PC-9 (cell line): ENCODE measurements at regions of chr16 and their contacts with region 1.

Region 1: GRCh38 chr16:84617791-84618580 is at the start of gene COTL1:
- DNase-seq: peak; percentile 88 to 97
- H3K4me3 ChIP-seq: peak within 1 kb of the TSS; percentile 74
- H3K27ac ChIP-seq: peak within 1 kb of the TSS; percentile 97
- H3K4me1 ChIP-seq: peaks cover 49% of the 10 kb centered on the region
- H3K27me3 ChIP-seq: no peaks in the 10 kb centered on the region
- CTCF ChIP-seq: no peak
- total RNA-seq, gene COTL1: 458 and 512 TPM in 2 replicates

Region 2: GRCh38 chr16:84072014-84072413 is 546.0 kb before region 1 on chr16:
- CTCF ChIA-PET with region 1: no interaction called
- POLR2A ChIA-PET with region 1: interaction called, 11 read pairs
- intact Hi-C with region 1: no loop called
- DNase-seq: no peak
- H3K4me3 ChIP-seq: no peak overlapping the region
- H3K27ac ChIP-seq: no peak overlapping the region
- H3K4me1 ChIP-seq: no peaks in the 10 kb centered on the region
- H3K27me3 ChIP-seq: no peaks in the 10 kb centered on the region
- CTCF ChIP-seq: no peak

Region 3: DNA sequence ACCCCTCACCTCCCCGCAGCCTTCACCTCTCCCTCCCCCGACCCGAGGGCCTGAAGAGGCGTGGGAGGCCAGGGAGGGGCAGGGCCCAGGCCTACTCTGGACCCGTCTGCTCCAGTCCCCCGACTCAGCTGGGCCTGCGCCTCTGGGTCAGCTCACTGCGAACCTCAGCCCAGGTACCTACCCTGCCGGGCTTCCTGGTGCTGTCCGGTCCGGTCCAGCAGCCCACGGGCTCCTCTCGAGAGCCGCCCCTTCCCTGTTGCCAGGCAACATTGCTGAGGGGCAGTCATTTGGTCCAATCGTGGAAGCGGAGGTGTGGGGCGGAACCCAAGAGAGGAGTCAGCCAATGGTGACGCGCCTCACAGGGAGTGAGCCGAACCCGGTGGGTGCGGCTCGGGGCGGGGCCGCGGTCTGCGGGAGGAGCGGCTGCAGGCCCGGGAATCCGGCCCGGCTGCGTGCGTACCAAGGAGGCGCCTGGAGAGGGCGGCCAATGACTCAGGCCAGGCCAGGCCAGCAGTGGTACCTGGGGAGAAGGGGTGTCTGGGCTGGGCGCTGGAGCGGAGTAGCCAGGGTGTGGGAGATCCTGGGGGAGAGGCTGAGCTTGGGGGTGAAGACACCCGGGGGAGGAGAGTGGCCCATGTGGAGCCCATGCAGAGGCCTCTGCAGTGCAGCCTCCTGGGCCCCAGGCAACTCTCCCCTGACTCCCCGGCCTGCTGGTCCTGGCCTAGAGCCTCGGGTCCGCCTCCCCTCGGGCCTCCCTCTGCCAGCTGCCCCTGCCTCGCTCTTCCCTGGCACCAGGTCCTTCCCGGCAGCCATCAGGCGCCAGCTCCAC is 113.4 kb before region 1 on chr16 and contains the start of gene MEAK7:
- CTCF ChIA-PET with region 1: interaction called, 11 read pairs
- POLR2A ChIA-PET with region 1: interaction called, 8 read pairs
- intact Hi-C with region 1: loop called (anchors 1 kb)
- DNase-seq: peak; percentile 95 to 99
- H3K4me3 ChIP-seq: peak within 1 kb of the TSS; percentile 92
- H3K27ac ChIP-seq: peak within 1 kb of the TSS; percentile 99
- H3K4me1 ChIP-seq: peaks cover 59% of the 10 kb centered on the region
- H3K27me3 ChIP-seq: no peaks in the 10 kb centered on the region
- CTCF ChIP-seq: no peak
- total RNA-seq, gene MEAK7: 73.4 and 74.6 TPM in 2 replicates

Region 4: DNA sequence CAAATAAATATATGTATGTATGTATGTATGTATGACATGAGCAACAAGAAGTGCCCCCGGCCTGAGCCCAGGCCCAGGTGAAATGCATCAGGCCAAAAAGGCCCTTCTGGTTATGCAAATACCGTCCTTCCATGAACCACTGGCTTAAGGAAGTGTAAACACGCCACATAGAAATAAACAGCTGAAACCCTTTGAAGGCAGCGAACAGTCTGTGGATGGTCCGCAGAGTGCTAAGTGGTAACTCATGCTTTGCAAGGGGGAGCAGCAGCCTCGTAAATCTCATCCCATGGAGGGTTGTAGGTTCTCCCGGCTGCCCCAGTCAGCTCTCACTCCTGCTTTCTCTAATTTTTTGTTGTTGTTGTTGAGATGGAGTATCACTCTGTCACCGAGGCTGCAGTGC is 36.8 kb before region 1 on chr16:
- CTCF ChIA-PET with region 1: interaction called, 7 read pairs
- POLR2A ChIA-PET with region 1: interaction called, 10 read pairs
- intact Hi-C with region 1: no loop called
- DNase-seq: no peak
- H3K4me3 ChIP-seq: no peak overlapping the region
- H3K27ac ChIP-seq: no peak overlapping the region
- H3K4me1 ChIP-seq: no peaks in the 10 kb centered on the region
- H3K27me3 ChIP-seq: no peaks in the 10 kb centered on the region
- CTCF ChIP-seq: no peak

Region 5: GRCh38 chr16:84633622-84634021 is 15.6 kb after region 1 on chr16:
- CTCF ChIA-PET with region 1: no interaction called
- POLR2A ChIA-PET with region 1: no interaction called
- intact Hi-C with region 1: no loop called
- DNase-seq: no peak
- H3K4me3 ChIP-seq: no peak overlapping the region
- H3K27ac ChIP-seq: no peak overlapping the region
- H3K4me1 ChIP-seq: no peaks in the 10 kb centered on the region
- H3K27me3 ChIP-seq: no peaks in the 10 kb centered on the region
- CTCF ChIP-seq: no peak

Region 6: DNA sequence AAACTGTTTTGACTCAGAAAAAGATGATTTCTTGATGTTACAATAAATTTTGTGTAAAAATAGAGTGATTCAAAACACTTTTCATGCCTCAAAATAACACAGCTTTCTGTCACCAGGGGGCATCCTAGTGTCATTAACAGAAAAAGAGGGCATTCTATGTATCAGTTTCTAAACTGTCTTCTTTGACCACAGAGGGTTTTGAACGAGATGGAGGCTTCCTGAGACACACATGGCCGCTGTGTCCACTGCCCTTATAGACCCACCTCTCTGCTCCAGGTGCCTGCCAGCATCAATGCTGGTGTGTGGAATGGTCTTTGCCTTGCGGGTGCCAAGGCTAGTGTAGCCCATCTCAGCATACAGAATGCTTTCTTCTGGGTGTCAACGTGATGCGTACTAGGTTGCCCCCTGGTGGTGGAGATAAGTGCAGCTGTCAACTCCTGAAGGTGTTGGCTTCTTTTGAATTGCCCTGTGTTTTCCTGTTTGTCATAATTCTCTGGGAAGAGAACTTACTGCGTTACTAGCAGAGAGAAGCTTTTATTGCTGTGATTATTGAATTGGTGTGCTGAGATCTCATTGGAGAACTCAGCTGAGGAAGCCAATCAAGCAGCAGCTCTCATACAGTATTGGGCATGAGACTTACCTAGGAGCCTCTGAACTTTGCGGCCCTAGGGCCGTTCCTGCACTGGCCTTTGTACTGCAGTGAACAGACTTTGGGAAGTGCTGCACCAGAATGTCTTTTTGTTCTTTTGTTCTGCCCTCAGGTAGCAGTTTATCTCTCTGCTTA is 120.5 kb after region 1 on chr16:
- CTCF ChIA-PET with region 1: interaction called, 18 read pairs
- POLR2A ChIA-PET with region 1: no interaction called
- intact Hi-C with region 1: loop called (anchors 1 kb)
- DNase-seq: peak in 1 of 2 experiments; percentile 66
- H3K4me3 ChIP-seq: no peak overlapping the region
- H3K27ac ChIP-seq: 0 out of 2 replicates have a peak overlapping the region, but pooled peaks have one; percentile 18
- H3K4me1 ChIP-seq: peaks cover 48% of the 10 kb centered on the region
- H3K27me3 ChIP-seq: no peaks in the 10 kb centered on the region
- CTCF ChIP-seq: peak; percentile 89